ENCODE measurements at regions of chr1 and their contacts with region 1.

Region 1: GRCh38 chr1:197663178-197663953 is 111.9 kb downstream of the DENND1B start:
- DNase-seq: no peak
- ATAC-seq: no peak
- H3K4me3 ChIP-seq: no peak overlapping the region
- H3K27ac ChIP-seq: no peak overlapping the region
- H3K4me1 ChIP-seq: no peaks in the 10 kb centered on the region
- H3K27me3 ChIP-seq: no peaks in the 10 kb centered on the region
- CTCF ChIP-seq: no peak
- EP300 ChIP-seq: no peak
- POLR2A ChIP-seq: no peak
- RAD21 ChIP-seq: no peak

Region 2: DNA sequence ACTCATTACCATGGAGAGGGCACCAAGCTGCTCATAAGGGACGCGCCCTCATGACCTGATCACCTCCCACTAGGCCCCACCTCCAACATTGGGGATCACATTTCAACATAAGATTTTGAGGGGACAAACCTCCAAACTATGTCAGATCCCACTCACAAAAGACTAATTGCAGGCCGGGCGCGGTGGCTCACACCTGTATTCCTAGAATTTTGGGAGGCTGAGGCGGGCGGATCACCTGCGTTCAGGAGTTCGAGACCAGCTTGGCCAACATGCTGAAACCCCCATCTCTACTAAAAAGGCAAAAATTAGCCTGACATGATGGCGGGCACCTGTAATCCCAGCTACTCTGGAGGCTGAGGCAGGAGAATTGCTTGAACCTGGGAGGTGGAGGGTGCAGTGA is 166.6 kb before region 1 on chr1:
- CTCF ChIA-PET with region 1: no interaction called
- POLR2A ChIA-PET with region 1: no interaction called
- in situ Hi-C with region 1: no loop called
- intact Hi-C with region 1: no loop called
- DNase-seq: no peak
- ATAC-seq: no peak
- H3K4me3 ChIP-seq: no peak overlapping the region
- H3K27ac ChIP-seq: no peak overlapping the region
- H3K4me1 ChIP-seq: no peaks in the 10 kb centered on the region
- H3K27me3 ChIP-seq: no peaks in the 10 kb centered on the region
- CTCF ChIP-seq: no peak
- EP300 ChIP-seq: no peak
- POLR2A ChIP-seq: no peak
- RAD21 ChIP-seq: no peak

Region 3: DNA sequence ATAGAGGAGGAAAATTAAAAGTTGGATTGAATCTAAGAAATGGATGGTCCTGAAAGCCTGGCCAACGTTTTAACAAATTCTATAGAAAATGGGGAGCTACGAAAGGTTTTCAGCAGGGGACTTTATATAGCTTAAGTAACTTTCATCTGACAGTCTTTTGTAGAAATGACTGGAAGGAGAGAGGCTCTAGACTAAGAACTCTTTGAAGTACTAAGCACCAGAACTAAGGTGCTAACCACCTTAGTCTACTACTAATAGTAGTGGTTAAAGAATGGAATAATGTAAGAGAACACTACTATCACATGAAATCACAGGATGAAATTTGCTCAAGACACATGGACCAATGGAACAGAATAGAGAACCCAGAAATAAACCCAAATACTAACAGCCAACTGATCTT is 14.2 kb before region 1 on chr1:
- CTCF ChIA-PET with region 1: no interaction called
- POLR2A ChIA-PET with region 1: no interaction called
- in situ Hi-C with region 1: no loop called
- intact Hi-C with region 1: loop called (anchors 1 kb)
- DNase-seq: no peak
- ATAC-seq: no peak
- H3K4me3 ChIP-seq: no peak overlapping the region
- H3K27ac ChIP-seq: no peak overlapping the region
- H3K4me1 ChIP-seq: no peaks in the 10 kb centered on the region
- H3K27me3 ChIP-seq: no peaks in the 10 kb centered on the region
- CTCF ChIP-seq: no peak
- EP300 ChIP-seq: no peak
- POLR2A ChIP-seq: no peak
- RAD21 ChIP-seq: no peak